GM18951 (cell line): ENCODE measurements at regions of chr10 and their contacts with region 1.

Region 1: GRCh38 chr10:110354322-110354766 is 49.6 kb upstream of the SMNDC1 start:
- POLR2A ChIP-seq: no peak

Region 2: GRCh38 chr10:110214380-110214826 is 139.9 kb before region 1 on chr10:
- in situ Hi-C with region 1: no loop called
- POLR2A ChIP-seq: no peak

Region 3: DNA sequence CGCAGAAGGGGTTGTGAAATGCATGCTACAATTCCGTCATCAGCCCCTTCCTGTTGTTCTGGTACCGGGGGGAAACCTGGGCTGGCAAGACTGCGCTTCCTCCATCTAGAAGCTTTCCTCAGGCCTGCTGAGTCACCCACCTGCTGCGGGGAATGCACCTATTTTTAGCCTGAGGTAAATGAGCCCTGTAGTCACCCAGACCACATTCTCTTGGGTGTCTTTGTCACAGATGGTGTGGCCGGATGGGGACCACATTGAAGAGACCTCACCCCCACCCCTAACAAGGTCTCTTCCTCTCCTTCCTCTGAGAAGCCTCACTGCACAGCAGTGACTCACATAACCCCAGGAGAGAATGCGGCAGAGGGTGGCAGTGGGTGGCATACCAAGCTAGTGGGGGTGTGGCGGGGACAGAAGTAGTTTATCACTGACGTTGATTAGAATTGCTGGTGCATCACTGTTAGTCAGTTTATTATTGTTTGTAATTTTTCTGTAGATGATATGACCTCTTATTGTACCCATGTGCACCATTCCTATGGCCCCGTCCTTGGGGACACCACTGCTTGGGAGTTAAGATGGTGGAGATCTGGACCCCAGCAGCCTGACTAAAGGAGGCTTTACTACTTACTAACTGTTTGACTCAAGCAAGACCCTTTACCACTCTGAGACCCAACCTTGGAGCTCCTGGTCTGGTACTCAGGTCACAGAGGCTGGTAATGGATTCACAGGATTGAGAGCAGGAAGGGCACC is 60.4 kb after region 1 on chr10:
- in situ Hi-C with region 1: loop called (anchors 5 kb)
- POLR2A ChIP-seq: peak; percentile 52

Region 4: DNA sequence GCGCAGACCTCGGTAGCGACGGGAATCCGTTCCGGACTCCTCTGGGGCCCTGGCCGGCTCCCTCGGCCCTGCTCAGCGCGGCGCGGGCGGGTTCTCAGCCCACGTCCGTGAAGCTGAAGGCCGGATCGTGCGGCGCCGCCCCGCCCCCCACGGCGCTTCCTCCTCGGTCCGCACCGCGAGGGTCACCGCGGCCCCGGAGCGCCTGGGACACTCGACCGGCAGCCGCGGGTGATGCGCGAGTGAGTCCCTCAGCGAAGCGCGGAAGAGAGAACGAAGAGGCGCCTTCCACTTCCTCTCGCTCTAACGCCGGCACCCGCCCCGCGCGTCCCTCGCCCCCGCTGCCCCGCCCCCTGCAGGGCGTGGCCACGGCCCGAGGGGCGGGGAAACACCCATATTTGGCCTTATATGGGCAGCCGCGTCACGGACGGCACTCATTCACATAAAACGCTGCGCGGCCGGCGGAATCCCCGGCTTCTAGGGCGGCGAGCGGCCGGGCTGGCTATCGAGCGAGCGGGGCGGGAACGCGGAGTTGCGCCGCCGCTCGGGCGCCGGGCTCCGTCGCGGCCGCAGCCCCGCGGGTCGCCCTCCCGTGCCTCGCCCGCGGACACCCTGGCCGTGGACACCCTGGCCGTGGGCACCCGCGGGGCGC is 143.2 kb after region 1 on chr10 and contains the start of gene DUSP5:
- in situ Hi-C with region 1: loop called (anchors 5 kb)
- POLR2A ChIP-seq: peak; percentile 99

Region 5: GRCh38 chr10:110535958-110536891 is 181.9 kb after region 1 on chr10:
- in situ Hi-C with region 1: loop called (anchors 10 kb)
- POLR2A ChIP-seq: no peak